IMR-90 (cell line): ENCODE measurements at regions of chr2 and their contacts with region 1.

Region 1: GRCh38 chr2:18435421-18436037 is 124.9 kb downstream of the RDH14 start:
- DNase-seq: peak; percentile 79
- ATAC-seq: peak; percentile 57
- H3K4me3 ChIP-seq: no peak overlapping the region
- H3K27ac ChIP-seq: no peak overlapping the region
- H3K4me1 ChIP-seq: peaks cover 12% of the 10 kb centered on the region
- H3K27me3 ChIP-seq: no peaks in the 10 kb centered on the region
- CTCF ChIP-seq: peak; percentile 75
- POLR2A ChIP-seq: 0 out of 2 replicates have a peak, but pooled peaks have one; percentile 28
- RAD21 ChIP-seq: peak; percentile 84

Region 2: DNA sequence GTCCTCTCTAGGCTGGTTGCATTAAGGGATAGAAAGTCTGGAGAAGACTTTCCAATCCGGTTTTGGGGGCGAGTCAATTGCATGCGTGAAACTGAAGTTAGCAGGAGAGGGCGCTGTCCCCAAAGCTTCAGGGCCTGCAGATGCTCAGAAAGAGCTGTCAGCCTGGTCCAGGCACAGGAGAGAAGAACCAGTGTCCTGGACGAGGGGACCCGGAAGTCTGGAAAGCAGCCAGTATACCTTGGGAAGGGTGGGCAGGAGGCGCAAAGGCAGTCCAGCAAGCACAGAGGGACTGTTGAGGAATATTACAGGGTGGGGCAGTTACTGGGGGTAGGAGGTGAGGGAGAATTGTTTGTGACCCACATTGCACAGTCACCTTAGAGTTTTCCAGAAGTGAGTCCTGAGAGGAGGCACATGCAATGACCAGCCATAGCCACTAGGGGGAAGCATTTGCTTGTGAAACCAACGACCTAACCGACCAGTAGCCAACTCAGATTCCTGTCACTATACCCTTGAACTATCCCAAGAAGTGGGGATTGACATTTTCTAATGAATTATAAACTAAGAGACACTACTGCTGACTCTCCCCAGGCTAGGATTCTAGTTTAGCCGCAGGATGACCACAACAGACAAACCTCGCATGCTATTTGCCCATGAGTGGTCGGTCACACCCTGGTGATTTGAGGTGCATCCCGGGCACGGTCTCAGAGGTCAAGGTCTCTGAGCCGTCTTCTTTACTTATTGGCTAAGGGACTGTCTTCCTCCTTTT is 47.9 kb before region 1 on chr2:
- CTCF ChIA-PET with region 1: no interaction called
- POLR2A ChIA-PET with region 1: no interaction called
- dilution Hi-C with region 1: no loop called
- in situ Hi-C with region 1: no loop called
- intact Hi-C with region 1: loop called (anchors 1 kb)
- DNase-seq: peak; percentile 79
- ATAC-seq: peak; percentile 99
- H3K4me3 ChIP-seq: no peak overlapping the region
- H3K27ac ChIP-seq: no peak overlapping the region
- H3K4me1 ChIP-seq: no peaks in the 10 kb centered on the region
- H3K27me3 ChIP-seq: no peaks in the 10 kb centered on the region
- CTCF ChIP-seq: peak; percentile 94
- POLR2A ChIP-seq: no peak
- RAD21 ChIP-seq: peak; percentile 96

Region 3: GRCh38 chr2:18455236-18455862 is 19.8 kb after region 1 on chr2:
- CTCF ChIA-PET with region 1: interaction called, 4 read pairs
- POLR2A ChIA-PET with region 1: interaction called, 14 read pairs
- dilution Hi-C with region 1: no loop called
- in situ Hi-C with region 1: no loop called
- intact Hi-C with region 1: no loop called
- DNase-seq: peak; percentile 89
- ATAC-seq: peak; percentile 88
- H3K4me3 ChIP-seq: no peak overlapping the region
- H3K27ac ChIP-seq: peak overlapping the region; percentile 73; the same call in 1 of the 2 replicates
- H3K4me1 ChIP-seq: peaks cover 16% of the 10 kb centered on the region
- H3K27me3 ChIP-seq: no peaks in the 10 kb centered on the region
- CTCF ChIP-seq: 0 out of 2 replicates have a peak, but pooled peaks have one; percentile 16
- POLR2A ChIP-seq: no peak
- RAD21 ChIP-seq: no peak

Region 4: GRCh38 chr2:18719978-18720775 is 284.6 kb after region 1 on chr2:
- CTCF ChIA-PET with region 1: no interaction called
- POLR2A ChIA-PET with region 1: interaction called, 14 read pairs
- dilution Hi-C with region 1: no loop called
- in situ Hi-C with region 1: no loop called
- intact Hi-C with region 1: no loop called
- DNase-seq: peak; percentile 58
- ATAC-seq: peak; percentile 82
- H3K4me3 ChIP-seq: no peak overlapping the region
- H3K27ac ChIP-seq: no peak overlapping the region
- H3K4me1 ChIP-seq: peaks cover 1% of the 10 kb centered on the region; the same call in 1 of the 2 replicates
- H3K27me3 ChIP-seq: no peaks in the 10 kb centered on the region
- CTCF ChIP-seq: no peak
- POLR2A ChIP-seq: no peak
- RAD21 ChIP-seq: no peak

Region 5: DNA sequence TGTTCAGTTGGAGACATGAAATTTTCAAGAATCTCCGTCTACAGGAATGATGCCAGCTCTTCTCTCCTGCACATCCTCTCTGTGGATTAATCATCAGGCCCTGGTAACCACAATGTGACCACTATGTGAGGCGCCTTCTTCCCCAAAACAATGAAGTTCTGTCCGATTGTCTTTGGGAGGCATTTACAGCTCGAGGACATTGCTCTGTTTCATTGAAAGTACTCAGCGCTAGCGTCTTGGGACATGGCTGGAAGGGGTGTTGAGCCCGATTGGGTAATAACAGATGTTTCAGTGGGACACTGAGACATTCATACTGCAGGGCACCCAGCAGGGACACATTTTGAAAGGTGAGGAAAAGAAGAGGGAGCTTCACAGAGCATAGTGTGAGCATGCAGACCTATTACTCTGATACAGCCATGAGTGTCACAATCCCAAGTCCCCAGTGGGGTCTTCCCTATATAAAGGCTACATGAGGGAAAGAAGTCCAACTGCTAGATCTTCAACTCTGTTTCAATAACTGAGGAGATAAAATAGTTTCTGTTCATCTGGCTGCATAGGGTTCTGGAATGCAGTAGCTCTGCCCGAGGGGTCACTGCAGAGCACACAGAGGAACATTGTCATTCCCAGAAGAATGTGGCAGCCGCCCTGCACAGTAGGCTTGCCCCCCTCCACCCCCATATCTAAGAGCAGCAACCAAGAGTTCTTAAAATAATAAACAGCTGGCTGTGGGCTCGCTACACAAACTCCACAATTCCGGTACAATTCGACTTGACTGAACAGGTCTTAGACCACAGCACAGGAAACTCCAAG is 685.6 kb after region 1 on chr2:
- CTCF ChIA-PET with region 1: no interaction called
- POLR2A ChIA-PET with region 1: no interaction called
- dilution Hi-C with region 1: no loop called
- in situ Hi-C with region 1: no loop called
- intact Hi-C with region 1: loop called (anchors 10 kb)
- DNase-seq: peak; percentile 87
- ATAC-seq: peak; percentile 88
- H3K4me3 ChIP-seq: no peak overlapping the region
- H3K27ac ChIP-seq: peak overlapping the region; percentile 54
- H3K4me1 ChIP-seq: peaks cover 22% of the 10 kb centered on the region
- H3K27me3 ChIP-seq: no peaks in the 10 kb centered on the region
- CTCF ChIP-seq: no peak
- POLR2A ChIP-seq: no peak
- RAD21 ChIP-seq: peak; percentile 36; the same call in 1 of the 2 replicates

Region 6: GRCh38 chr2:19667085-19667484 is 1231.6 kb after region 1 on chr2:
- CTCF ChIA-PET with region 1: no interaction called
- POLR2A ChIA-PET with region 1: no interaction called
- dilution Hi-C with region 1: no loop called
- in situ Hi-C with region 1: no loop called
- intact Hi-C with region 1: loop called (anchors 10 kb)
- DNase-seq: peak; percentile 59
- ATAC-seq: peak; percentile 51
- H3K4me3 ChIP-seq: no peak overlapping the region
- H3K27ac ChIP-seq: no peak overlapping the region
- H3K4me1 ChIP-seq: no peaks in the 10 kb centered on the region; the same call in 1 of the 2 replicates
- H3K27me3 ChIP-seq: peaks cover 4% of the 10 kb centered on the region
- CTCF ChIP-seq: peak; percentile 47
- POLR2A ChIP-seq: no peak
- RAD21 ChIP-seq: peak; percentile 58

Region 7: DNA sequence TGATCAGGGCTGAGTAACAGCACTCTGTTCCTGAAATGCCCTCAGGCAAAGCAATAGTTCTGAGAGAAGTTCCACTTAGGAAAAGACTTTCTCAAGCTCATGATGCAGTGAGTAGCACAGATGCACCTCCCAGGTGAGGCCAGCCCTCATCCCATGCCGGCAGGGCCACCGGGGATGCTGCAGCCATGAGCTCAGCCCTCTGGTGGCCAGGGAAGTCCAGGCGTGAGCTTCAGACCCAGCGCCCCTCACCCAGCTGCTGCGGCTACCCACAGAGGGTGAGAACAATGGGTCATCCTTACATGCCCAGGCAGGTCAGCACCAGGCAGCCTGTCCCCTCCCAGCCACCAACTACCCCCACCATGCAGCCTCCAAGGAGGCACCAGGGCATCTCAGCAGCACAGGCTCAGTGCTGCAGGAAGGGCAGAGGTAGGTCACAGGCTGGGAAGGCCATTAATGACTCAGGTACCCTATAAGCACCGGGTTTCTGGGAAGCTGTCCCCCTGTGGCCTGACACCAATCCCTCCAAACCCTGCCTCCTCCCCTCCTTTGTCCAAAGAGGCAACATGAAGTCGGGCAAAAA is 1415.7 kb after region 1 on chr2:
- CTCF ChIA-PET with region 1: no interaction called
- POLR2A ChIA-PET with region 1: no interaction called
- dilution Hi-C with region 1: no loop called
- in situ Hi-C with region 1: loop called (anchors 10 kb)
- intact Hi-C with region 1: no loop called
- DNase-seq: no peak
- ATAC-seq: peak; percentile 35
- H3K4me3 ChIP-seq: no peak overlapping the region
- H3K27ac ChIP-seq: no peak overlapping the region
- H3K4me1 ChIP-seq: no peaks in the 10 kb centered on the region
- H3K27me3 ChIP-seq: peaks cover 3% of the 10 kb centered on the region
- CTCF ChIP-seq: no peak
- POLR2A ChIP-seq: no peak
- RAD21 ChIP-seq: 0 out of 2 replicates have a peak, but pooled peaks have one; percentile 18